ENCODE measurements at regions of chr17 and their contacts with region 1.

Region 1: GRCh38 chr17:59311130-59311920 is 20.1 kb upstream of the YPEL2 start:
- DNase-seq: no peak
- H3K4me3 ChIP-seq: no peak overlapping the region
- H3K27ac ChIP-seq: no peak overlapping the region
- H3K27me3 ChIP-seq: peaks cover 2% of the 10 kb centered on the region
- CTCF ChIP-seq: peak; percentile 81

Region 2: GRCh38 chr17:59435238-59435637 is 123.9 kb after region 1 on chr17:
- CTCF ChIA-PET with region 1: interaction called, 198 read pairs
- POLR2A ChIA-PET with region 1: interaction called, 4 read pairs
- DNase-seq: no peak
- H3K4me3 ChIP-seq: no peak overlapping the region
- H3K27ac ChIP-seq: no peak overlapping the region
- H3K27me3 ChIP-seq: no peaks in the 10 kb centered on the region
- CTCF ChIP-seq: no peak

Region 3: DNA sequence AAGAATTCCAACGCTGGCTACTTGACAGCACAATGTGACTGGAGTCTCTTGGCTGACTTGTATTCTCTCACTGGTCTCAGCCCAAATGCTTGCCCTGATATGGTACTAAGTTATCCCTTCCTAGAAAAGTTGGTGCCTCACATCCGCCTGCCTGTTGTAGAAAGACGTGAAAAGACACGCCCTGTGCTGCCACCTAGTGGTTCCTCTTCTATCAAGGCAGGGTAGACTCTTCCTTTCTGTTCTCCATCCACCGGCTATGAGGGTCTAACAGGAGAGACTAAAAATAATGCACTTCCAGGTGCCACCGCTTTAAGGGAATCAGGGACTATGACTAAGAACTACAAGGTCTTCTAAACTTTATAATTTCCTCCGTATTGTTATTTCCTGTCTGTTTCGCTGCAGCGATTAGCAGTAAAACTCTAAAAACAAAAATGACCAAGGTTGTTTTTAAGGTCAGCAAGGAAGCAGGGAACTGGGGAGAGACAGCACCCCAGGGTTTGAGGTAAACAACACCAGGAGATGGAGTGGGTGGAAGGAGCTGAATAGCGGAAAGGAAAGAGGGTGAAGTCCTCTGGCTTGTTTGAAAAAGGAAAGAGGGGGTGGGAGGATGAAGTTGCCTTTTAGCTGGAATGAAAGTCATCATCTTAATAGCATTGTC is 129.6 kb after region 1 on chr17:
- CTCF ChIA-PET with region 1: interaction called, 198 read pairs
- POLR2A ChIA-PET with region 1: no interaction called
- DNase-seq: peak; percentile 78
- H3K4me3 ChIP-seq: no peak overlapping the region
- H3K27ac ChIP-seq: no peak overlapping the region
- H3K27me3 ChIP-seq: no peaks in the 10 kb centered on the region
- CTCF ChIP-seq: peak; percentile 90

Region 4: DNA sequence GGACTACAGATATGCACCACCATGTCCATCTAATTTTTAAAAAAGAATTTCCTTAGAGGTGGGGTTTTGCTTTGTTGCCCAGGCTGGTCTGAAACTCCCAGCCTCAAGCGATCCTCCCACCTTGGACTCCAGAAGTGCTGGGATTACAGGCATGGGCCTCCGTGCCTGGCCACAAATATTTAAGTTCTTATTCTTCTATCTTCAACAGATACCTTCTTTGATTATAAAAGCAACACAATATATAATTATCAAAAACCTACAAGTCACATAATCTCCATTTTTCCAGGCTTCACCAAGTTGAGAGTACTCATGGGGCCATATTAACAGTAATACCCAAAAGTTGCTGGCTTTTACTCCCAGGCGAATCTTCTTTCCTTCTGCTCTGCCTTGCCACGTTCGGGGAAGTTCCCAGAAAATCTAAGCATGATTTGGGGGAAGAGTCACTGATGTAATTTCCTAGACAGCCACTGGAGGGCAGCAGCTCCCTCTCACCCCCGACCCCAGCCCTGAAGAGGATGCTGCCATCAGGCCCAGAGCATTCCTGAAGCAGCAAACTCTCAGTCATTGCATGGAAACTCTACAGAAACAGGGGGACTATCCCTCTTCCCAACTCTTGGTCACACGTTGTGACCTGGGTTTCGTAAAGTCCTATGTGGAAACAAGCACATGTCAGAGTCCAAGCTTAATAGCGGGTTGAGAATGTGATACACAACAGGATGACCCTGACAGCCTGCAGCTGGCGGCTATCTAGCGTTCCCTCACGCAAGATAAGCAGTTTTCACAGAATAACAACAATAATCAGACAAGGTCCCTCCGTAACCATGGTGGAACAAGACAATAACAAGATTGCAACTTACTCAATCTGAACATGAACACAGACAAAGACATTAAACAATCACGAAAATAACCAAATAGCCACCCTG is 210.1 kb after region 1 on chr17:
- CTCF ChIA-PET with region 1: interaction called, 25 read pairs
- POLR2A ChIA-PET with region 1: no interaction called
- DNase-seq: peak; percentile 21
- H3K4me3 ChIP-seq: no peak overlapping the region
- H3K27ac ChIP-seq: no peak overlapping the region
- H3K27me3 ChIP-seq: peaks cover 4% of the 10 kb centered on the region
- CTCF ChIP-seq: peak; percentile 85

Region 5: DNA sequence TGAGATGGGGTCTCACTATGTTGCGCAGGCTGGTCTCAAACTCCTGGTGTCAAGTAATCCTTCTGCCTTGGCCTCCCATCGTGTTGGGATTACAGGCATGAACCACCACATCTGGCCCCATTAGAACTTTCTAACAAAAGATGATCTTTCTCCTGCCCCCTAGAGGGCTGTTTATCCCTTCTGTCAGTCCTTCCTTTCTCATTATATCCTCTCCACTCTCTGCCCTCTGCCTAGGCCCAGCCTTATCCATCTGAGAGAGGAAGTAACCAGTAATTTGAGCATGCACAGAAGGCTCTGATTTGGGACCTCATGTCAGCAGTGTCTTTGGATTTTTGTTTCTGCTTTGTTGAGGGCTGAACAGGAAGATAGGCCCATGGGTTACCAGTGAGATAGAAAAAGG is 249.7 kb after region 1 on chr17:
- CTCF ChIA-PET with region 1: interaction called, 24 read pairs
- POLR2A ChIA-PET with region 1: no interaction called
- DNase-seq: no peak
- H3K4me3 ChIP-seq: no peak overlapping the region
- H3K27ac ChIP-seq: no peak overlapping the region
- H3K27me3 ChIP-seq: peaks cover 3% of the 10 kb centered on the region
- CTCF ChIP-seq: peak; percentile 42

Measured in AG04450 (cell line).